ENCODE measurements at regions of chr11 and their contacts with region 1.

Region 1: DNA sequence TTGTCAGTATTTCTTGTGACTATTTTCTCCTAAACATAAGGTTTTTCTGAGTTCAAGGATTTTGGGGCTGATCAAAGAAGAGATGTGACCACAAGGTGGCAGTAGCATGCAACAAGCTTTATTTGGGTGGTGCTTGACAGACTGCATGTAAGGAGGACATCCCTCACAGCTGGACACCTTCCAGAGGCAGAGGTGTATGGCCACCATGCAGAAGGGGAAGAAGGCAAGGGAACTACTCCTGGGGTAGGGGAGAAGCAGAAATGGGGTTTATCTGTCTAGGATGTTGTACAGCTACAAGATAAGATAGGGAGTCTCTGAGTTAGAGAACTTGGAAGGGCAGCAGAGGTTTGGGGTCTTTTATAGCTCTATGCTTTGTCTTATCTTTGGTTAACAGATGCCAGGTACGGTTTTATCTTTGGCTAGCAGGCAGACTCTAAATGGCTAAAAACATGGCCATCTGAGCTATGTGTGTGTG is 5.1 kb upstream of the BIRC2 start:
- DNase-seq: peak; percentile 83 to 84
- H3K4me3 ChIP-seq: no peak overlapping the region
- H3K27ac ChIP-seq: no peak overlapping the region
- H3K4me1 ChIP-seq: peaks cover 7 to 10% of the 10 kb centered on the region in 2 donors
- H3K27me3 ChIP-seq: no peaks in the 10 kb centered on the region
- CTCF ChIP-seq: peak; percentile 32 to 84 (median 80)
- POLR2A ChIP-seq: no peak

Region 2: GRCh38 chr11:102240502-102240901 is 101.4 kb before region 1 on chr11:
- intact Hi-C with region 1: no loop called
- DNase-seq: no peak
- H3K4me3 ChIP-seq: no peak overlapping the region
- H3K27ac ChIP-seq: peak overlapping the region in 2 of 3 donors; percentile 46 to 58
- H3K4me1 ChIP-seq: peaks cover 3 to 14% of the 10 kb centered on the region in 2 donors
- H3K27me3 ChIP-seq: no peaks in the 10 kb centered on the region
- CTCF ChIP-seq: no peak
- POLR2A ChIP-seq: no peak

Region 3: GRCh38 chr11:102287964-102288724 is 53.7 kb before region 1 on chr11:
- intact Hi-C with region 1: loop called (anchors 5 kb)
- DNase-seq: peak; percentile 26 to 33
- H3K4me3 ChIP-seq: no peak overlapping the region
- H3K27ac ChIP-seq: no peak overlapping the region
- H3K4me1 ChIP-seq: peaks cover 0 to 10% of the 10 kb centered on the region in 2 donors
- H3K27me3 ChIP-seq: no peaks in the 10 kb centered on the region
- CTCF ChIP-seq: peak; percentile 29 to 73 (median 71)
- POLR2A ChIP-seq: no peak

Region 4: GRCh38 chr11:102495161-102496042 is 153.5 kb after region 1 on chr11:
- intact Hi-C with region 1: loop called (anchors 5 kb)
- DNase-seq: peak in 1 of 2 donors; percentile 35
- H3K4me3 ChIP-seq: no peak overlapping the region
- H3K27ac ChIP-seq: no peak overlapping the region
- H3K4me1 ChIP-seq: peaks cover 0 to 5% of the 10 kb centered on the region in 2 donors
- H3K27me3 ChIP-seq: no peaks in the 10 kb centered on the region
- CTCF ChIP-seq: peak in 5 of 6 experiments; percentile 28 to 87 (median 75)
- POLR2A ChIP-seq: no peak

Region 5: GRCh38 chr11:102614485-102614884 is 272.6 kb after region 1 on chr11:
- intact Hi-C with region 1: loop called (anchors 5 kb)
- DNase-seq: no peak
- H3K4me3 ChIP-seq: no peak overlapping the region
- H3K27ac ChIP-seq: no peak overlapping the region
- H3K4me1 ChIP-seq: peaks cover 0 to 5% of the 10 kb centered on the region in 2 donors
- H3K27me3 ChIP-seq: no peaks in the 10 kb centered on the region
- CTCF ChIP-seq: peak in 1 of 6 experiments; percentile 10
- POLR2A ChIP-seq: no peak

Measured in thyroid gland (tissue), 4 donors.